HEK293T (cell line): ENCODE measurements at regions of chr10 and their contacts with region 1.

Region 1: GRCh38 chr10:119725828-119726675 is at the start of gene INPP5F:
- DNase-seq: peak; percentile 100

Region 2: GRCh38 chr10:119686439-119687191 is 39.4 kb before region 1 on chr10:
- CTCF ChIA-PET with region 1: interaction called, 3 read pairs
- POLR2A ChIA-PET with region 1: interaction called, 14 read pairs
- DNase-seq: peak; percentile 91

Region 3: GRCh38 chr10:119715628-119716505 is 10.2 kb before region 1 on chr10:
- CTCF ChIA-PET with region 1: no interaction called
- POLR2A ChIA-PET with region 1: interaction called, 37 read pairs
- DNase-seq: no peak

Region 4: DNA sequence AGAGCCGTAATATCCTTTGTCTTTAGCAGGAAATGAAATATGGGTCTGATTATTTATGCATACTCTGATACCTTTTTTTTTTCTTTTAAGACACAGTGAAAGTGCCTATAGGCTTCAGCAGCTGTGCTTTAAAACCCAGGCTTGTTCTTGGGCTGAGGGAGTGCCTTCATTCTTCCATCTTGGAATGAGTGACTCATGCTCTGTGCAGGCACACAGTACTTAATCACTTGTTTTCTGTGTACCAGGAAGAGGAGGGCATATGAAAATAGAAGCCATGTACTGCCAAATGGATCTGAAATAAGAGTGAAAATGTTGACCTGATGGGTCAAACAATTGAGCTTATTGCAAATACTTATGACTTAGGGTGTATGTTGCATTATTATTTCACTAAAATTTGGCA is 11.8 kb after region 1 on chr10:
- CTCF ChIA-PET with region 1: interaction called, 3 read pairs
- POLR2A ChIA-PET with region 1: interaction called, 11 read pairs
- DNase-seq: no peak

Region 5: DNA sequence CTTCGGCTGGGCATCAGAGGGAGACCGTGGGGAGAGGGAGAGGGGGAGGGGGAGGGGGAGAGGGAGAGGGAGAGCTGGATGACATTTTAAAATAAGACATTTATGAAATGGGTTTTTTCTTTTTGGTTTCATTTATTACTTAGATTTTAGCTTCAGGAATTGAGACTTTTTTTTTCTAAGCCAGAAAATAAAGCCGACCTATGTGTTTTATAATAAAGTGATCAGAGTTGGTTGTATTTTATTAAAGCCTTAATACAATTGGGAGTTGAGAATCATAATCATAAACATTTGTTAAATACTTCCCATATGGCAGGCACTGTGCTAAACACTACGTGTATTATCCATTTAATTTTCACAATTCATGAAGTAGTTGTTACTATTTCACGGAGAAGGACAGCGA is 70.0 kb after region 1 on chr10:
- CTCF ChIA-PET with region 1: no interaction called
- POLR2A ChIA-PET with region 1: no interaction called
- DNase-seq: no peak

Region 6: GRCh38 chr10:120011359-120012130 is 285.5 kb after region 1 on chr10:
- CTCF ChIA-PET with region 1: no interaction called
- POLR2A ChIA-PET with region 1: no interaction called
- DNase-seq: no peak